H1 (cell line): ENCODE measurements at regions of chr4 and their contacts with region 1.

Region 1: DNA sequence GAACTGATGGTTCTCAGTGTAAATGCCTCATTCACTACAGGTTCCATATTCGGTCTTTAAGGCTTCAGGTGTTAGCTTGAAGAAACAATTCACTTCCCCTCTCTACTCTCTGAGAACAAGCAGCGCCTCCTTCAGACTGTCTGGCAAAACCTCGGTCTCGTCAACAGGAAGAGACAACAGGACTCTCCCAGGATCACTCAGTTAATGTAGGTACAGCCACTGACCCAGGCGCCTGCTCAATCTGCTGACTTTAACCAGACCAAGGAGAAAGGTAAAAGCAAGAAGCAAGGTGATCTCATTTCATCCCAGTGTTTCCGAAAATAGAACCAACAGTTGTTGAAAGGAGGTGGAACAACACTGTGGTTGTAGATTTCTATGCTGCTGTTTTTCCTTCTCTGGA is 102.2 kb downstream of the SLC2A9 start:
- DNase-seq: peak in 1 of 2 experiments; percentile 50
- H3K4me3 ChIP-seq: no peak overlapping the region
- H3K27ac ChIP-seq: no peak overlapping the region
- H3K4me1 ChIP-seq: peaks cover 0 to 8% (median 4%) of the 10 kb centered on the region in 4 experiments; a peak in 3 of 7 replicates
- H3K27me3 ChIP-seq: no peaks in the 10 kb centered on the region
- CTCF ChIP-seq: peak; percentile 38 to 61 (median 44)
- EP300 ChIP-seq: no peak
- POLR2A ChIP-seq: no peak
- RAD21 ChIP-seq: peak; percentile 48 to 60

Region 2: GRCh38 chr4:9904976-9905587 is 14.0 kb before region 1 on chr4:
- CTCF ChIA-PET with region 1: interaction called, 23 read pairs
- POLR2A ChIA-PET with region 1: no interaction called
- DNase-seq: no peak
- H3K4me3 ChIP-seq: no peak overlapping the region
- H3K27ac ChIP-seq: no peak overlapping the region
- H3K4me1 ChIP-seq: no peaks in the 10 kb centered on the region
- H3K27me3 ChIP-seq: no peaks in the 10 kb centered on the region
- CTCF ChIP-seq: no peak
- EP300 ChIP-seq: no peak
- POLR2A ChIP-seq: no peak
- RAD21 ChIP-seq: no peak

Region 3: GRCh38 chr4:9932771-9933170 is 13.7 kb after region 1 on chr4:
- CTCF ChIA-PET with region 1: interaction called, 14 read pairs
- POLR2A ChIA-PET with region 1: no interaction called
- DNase-seq: no peak
- H3K4me3 ChIP-seq: no peak overlapping the region
- H3K27ac ChIP-seq: no peak overlapping the region
- H3K4me1 ChIP-seq: no peaks in the 10 kb centered on the region
- H3K27me3 ChIP-seq: peaks cover 0 to 2% (median 0%) of the 10 kb centered on the region in 4 experiments; a peak in 1 of 7 replicates
- CTCF ChIP-seq: no peak
- EP300 ChIP-seq: no peak
- POLR2A ChIP-seq: no peak
- RAD21 ChIP-seq: no peak